Activated CD4-positive, alpha-beta memory T cell treated with anti-CD3 and anti-CD28 coated beads for 36 hours (primary cell): ENCODE measurements at regions of chr16 and their contacts with region 1.

Region 1: GRCh38 chr16:84186685-84187437 is at the start of gene TAF1C:
- DNase-seq: peak; percentile 94
- H3K4me3 Mint-ChIP-seq: peak within 1 kb of the TSS; percentile 96
- H3K27ac Mint-ChIP-seq: peak within 1 kb of the TSS; percentile 86
- H3K4me1 Mint-ChIP-seq: peaks cover 22% of the 10 kb centered on the region
- H3K27me3 Mint-ChIP-seq: no peaks in the 10 kb centered on the region
- total RNA-seq, gene TAF1C: 44.7 to 48.1 TPM

Region 2: DNA sequence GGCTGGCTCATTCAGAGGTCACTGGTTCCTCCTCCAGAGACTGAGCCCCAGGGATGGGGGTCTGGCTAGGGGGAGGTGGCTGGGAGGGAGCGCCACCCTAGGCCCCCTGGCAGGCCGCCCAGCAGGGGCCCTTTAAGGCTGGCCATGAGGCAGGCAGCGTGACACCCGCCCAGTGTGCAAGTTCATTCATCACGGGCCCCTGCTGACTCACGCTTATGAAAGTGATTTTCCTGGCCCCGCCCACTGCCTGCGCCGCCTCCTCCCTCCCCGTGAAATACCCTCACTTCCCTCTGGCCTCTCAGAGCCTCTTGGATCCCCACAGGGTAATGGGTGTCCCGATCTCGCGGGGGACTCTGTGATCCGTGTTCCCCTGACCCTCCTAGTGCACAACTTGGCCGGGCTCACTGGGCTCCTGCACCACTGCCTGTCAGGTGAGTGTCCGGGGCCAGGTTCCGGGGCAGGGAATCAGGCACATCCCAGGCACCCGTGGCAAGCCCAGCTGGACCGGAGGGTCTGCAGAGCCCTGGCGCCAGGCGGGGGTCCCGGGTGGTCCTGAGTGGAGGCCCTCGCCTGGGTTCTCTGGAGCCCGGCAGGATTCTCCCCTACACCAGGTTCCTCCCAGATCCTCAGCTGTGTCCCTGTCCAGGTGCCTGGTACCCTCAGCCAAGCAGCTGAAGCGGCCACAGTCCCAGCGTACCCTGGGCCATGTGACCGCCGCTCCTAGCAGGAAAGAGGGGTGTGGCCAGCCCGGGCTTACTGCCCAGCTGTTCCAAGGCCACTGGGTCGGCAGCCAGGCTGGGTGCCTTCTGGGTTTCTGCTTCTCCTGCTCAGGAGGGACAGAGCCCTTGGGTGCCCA is 233.7 kb before region 1 on chr16 and contains the start of gene OSGIN1:
- CTCF ChIA-PET with region 1: interaction called, 9 read pairs
- POLR2A ChIA-PET with region 1: no interaction called
- intact Hi-C with region 1: loop called (anchors 5 kb)
- DNase-seq: peak; percentile 91
- H3K4me3 Mint-ChIP-seq: peak within 1 kb of the TSS; percentile 57
- H3K27ac Mint-ChIP-seq: no peak within 1 kb of the TSS
- H3K4me1 Mint-ChIP-seq: peaks cover 9% of the 10 kb centered on the region
- H3K27me3 Mint-ChIP-seq: peaks cover 21% of the 10 kb centered on the region
- total RNA-seq, gene OSGIN1: 0.34 to 0.40 TPM

Region 3: DNA sequence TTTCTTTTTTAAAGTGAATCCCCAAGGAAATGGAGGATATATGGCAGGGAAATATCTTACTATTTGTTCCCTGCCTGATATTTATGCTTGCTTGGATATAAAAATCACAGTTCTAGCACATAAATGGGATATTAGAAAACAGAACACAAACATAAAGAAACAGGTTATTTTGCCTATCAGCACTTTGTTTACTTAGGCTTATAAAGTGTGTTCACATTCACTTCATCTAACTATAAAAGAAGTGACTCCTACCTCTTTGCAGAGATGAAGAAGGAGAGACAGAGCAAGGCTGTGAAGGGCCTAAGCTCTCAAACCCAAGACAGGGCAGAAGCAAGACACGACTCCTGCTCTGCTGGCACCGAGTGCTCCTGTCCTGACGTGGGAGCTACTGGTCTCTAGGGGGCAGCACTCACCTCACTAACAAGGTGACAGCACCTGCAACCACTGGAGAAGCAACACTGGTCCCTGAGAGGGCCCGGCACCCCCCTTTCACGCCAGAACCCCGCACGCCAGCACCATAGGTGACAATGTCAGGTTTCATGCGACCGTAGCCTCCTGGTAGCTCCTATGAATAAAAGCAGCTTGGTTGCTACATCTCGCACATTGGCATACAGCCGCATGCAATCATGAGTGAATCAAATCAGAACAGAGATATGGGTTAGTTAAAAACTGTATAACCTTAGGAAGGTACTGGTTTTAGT is 102.1 kb before region 1 on chr16:
- CTCF ChIA-PET with region 1: interaction called, 103 read pairs
- POLR2A ChIA-PET with region 1: no interaction called
- intact Hi-C with region 1: loop called (anchors 1 kb)
- DNase-seq: peak; percentile 79
- H3K4me3 Mint-ChIP-seq: no peak overlapping the region
- H3K27ac Mint-ChIP-seq: no peak overlapping the region
- H3K4me1 Mint-ChIP-seq: peaks cover 39% of the 10 kb centered on the region
- H3K27me3 Mint-ChIP-seq: no peaks in the 10 kb centered on the region

Region 4: DNA sequence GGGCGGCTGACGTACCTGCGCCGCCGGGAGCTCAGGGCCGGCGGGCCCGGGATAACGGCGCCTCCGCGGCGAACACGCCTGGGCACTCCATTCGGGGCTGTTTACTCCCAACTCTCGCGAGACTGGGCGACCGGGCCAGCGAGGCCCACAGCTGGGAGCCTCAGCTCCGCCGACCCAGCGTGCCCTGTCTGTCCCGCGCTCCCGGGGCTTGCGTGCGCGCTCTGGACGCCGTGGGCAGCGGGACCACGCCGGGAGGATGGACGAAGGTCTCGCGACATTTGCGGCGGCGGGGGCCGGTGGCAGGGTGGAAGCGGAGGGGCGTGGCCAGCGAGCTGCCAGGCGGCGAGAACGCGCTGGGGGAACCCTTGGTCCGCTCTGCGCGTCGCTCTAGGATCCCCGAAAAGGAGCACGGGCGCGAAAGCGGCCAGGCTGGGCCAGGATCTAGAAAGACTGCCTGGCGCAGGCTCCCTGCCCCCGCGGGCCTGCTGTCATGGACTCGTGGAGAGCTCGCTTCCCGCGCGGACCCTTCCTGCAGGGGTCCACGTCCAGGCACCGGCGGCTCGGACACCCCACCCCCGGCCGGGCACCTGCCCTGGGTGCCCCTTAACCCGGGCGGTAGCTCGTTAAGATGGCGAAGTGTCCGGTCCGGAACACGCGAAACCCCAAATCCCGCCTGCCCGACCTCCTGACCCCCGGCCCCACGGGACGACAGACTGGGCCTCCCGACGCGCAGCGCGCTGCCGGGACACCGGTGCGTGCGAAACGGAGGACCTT is 70.0 kb before region 1 on chr16 and contains the start of gene MBTPS1:
- CTCF ChIA-PET with region 1: interaction called, 27 read pairs
- POLR2A ChIA-PET with region 1: interaction called, 11 read pairs
- intact Hi-C with region 1: no loop called
- DNase-seq: peak; percentile 99
- H3K4me3 Mint-ChIP-seq: peak within 1 kb of the TSS; percentile 91
- H3K27ac Mint-ChIP-seq: peak within 1 kb of the TSS; percentile 92
- H3K4me1 Mint-ChIP-seq: peaks cover 25% of the 10 kb centered on the region
- H3K27me3 Mint-ChIP-seq: no peaks in the 10 kb centered on the region
- total RNA-seq, gene MBTPS1: 37.5 to 37.6 TPM

Region 5: GRCh38 chr16:84175350-84176081 is 11.3 kb before region 1 on chr16:
- CTCF ChIA-PET with region 1: interaction called, 59 read pairs
- POLR2A ChIA-PET with region 1: no interaction called
- intact Hi-C with region 1: loop called (anchors 1 kb)
- DNase-seq: peak; percentile 79
- H3K4me3 Mint-ChIP-seq: no peak overlapping the region
- H3K27ac Mint-ChIP-seq: no peak overlapping the region
- H3K4me1 Mint-ChIP-seq: peaks cover 25% of the 10 kb centered on the region
- H3K27me3 Mint-ChIP-seq: peaks cover 6% of the 10 kb centered on the region

Region 6: DNA sequence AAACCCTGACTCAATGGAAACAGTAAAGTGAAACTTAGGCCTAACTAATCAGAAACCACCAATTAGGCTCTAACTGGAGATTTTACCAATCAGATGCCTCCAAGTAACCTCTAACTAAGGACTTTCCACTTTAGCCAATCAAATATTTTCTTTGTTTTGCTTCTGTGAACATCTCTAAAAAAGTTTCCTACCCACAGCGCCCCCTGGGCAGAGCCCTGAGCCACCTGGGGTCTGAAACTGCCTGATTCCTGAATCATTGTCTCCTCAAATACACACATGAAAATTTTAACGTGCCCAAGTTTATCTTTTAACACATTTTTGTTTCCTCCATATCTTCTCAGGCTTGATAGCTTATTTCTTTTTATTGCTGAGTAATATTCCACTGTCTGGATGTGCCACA is 23.1 kb after region 1 on chr16:
- CTCF ChIA-PET with region 1: no interaction called
- POLR2A ChIA-PET with region 1: no interaction called
- intact Hi-C with region 1: no loop called
- DNase-seq: no peak
- H3K4me3 Mint-ChIP-seq: no peak overlapping the region
- H3K27ac Mint-ChIP-seq: no peak overlapping the region
- H3K4me1 Mint-ChIP-seq: peaks cover 2% of the 10 kb centered on the region
- H3K27me3 Mint-ChIP-seq: no peaks in the 10 kb centered on the region

Region 7: GRCh38 chr16:85898521-85899442 is 1711.9 kb after region 1 on chr16 and contains the start of gene IRF8:
- CTCF ChIA-PET with region 1: no interaction called
- POLR2A ChIA-PET with region 1: no interaction called
- intact Hi-C with region 1: loop called (anchors 5 kb)
- DNase-seq: peak; percentile 80
- H3K4me3 Mint-ChIP-seq: peak within 1 kb of the TSS; percentile 82
- H3K27ac Mint-ChIP-seq: peak within 1 kb of the TSS; percentile 76
- H3K4me1 Mint-ChIP-seq: peaks cover 40% of the 10 kb centered on the region
- H3K27me3 Mint-ChIP-seq: peaks cover 28% of the 10 kb centered on the region
- total RNA-seq, gene IRF8: 41.7 to 43.1 TPM